ENCODE measurements at regions of chr1 and their contacts with region 1.

Region 1: DNA sequence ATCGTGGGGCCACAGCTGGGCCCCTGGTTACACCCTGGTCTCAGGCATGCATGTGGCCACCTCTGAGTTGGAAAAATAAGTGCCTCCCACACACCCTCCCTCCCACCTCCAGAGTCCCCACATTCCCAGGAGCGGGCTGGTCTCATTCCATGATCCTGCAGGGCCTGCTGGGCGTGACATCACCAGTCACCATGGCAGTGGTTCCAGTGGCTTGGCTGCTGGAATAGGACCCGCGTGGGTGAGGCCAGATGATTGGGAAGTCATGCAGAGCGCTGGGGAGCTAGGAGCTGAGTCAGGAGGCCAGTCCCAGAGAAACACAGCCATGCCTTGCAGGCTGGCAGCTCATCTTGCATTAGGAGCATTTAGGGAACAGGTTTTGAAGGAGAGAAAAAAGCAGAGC is 125.4 kb upstream of the TMEM51 start:
- DNase-seq: peak; percentile 74
- H3K4me3 ChIP-seq: no peak overlapping the region
- H3K27me3 ChIP-seq: no peaks in the 10 kb centered on the region
- CTCF ChIP-seq: no peak

Region 2: DNA sequence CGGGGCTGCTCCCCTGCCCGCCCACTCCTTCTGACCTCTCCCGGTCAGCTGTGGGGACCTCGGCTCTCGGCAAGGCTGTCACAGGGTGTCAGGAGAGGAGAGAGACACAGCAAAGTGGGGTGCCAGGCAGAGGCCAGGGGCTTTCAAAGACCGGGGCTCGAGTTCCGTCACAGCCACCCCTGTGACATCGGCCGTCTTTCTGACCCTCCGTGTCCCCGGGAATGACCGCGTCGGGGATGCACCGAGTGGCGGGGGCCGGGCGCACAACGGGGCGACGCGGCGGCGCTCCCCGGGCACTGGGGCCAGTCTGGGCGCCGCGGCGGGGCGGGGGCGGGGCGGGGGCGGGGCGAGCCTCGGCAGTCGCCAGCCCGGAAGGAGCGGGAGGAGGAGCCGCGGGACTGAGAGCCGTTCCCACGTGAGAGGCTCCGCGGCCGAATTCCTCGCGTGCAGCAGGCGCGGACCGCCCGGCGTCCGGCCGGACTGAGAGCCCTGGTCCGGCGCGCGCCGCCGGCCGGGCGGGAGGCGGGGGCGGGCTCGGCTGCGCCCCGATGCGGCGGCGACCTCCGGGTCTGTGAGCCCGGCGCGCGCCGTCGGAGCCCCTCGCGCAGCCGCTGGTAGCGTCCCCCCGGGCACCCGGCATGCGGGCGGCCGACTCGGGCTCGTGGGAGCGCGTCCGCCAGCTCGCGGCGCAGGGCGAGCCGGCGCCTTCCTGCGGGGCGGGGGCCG is 104.2 kb before region 1 on chr1:
- CTCF ChIA-PET with region 1: interaction called, 19 read pairs
- POLR2A ChIA-PET with region 1: no interaction called
- DNase-seq: no peak
- H3K4me3 ChIP-seq: peak overlapping the region; percentile 75
- H3K27me3 ChIP-seq: no peaks in the 10 kb centered on the region
- CTCF ChIP-seq: no peak

Region 3: DNA sequence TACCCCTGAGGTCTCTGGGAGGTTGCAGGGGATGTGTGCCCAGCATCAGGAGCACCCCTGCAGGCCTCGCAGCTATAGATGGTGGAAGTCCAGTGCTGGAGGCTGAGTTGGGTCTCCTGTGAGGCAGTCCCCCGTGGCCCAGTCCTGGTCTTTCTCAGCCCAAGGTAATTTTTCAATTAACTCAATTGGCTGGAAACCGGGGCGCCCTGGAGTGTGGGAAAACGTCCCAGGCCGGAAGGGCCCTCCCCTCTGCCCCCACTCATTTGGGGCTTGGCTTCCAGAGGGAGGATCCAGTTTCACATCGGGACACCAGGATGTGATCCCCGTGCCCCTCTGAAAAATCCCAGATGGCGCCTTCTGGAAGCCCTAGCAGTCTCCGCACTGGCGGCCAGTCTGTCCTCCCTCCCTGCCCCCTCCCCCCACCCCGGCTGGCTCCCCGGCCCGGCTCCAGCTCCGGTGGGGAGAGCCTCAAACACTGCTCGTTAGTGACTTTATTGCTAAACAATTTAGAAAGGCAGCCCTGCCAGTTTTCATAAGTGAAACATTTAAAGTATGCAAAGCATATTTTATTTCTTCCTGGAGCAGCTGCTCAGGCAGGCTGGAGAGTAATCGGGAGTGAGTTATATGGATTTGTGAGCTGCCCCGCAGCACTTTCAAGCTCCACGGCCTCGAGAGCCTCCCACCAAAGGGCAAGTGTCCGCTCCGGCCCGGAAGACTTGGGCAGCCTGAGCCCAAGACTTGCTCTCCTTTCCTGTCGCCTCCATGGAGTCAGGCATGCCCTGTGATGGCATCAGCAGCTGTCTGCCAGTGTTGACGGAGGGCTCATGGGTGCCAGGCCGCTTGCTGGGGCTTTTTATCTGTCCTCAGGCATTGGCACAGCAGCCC is 82.7 kb before region 1 on chr1:
- CTCF ChIA-PET with region 1: interaction called, 15 read pairs
- POLR2A ChIA-PET with region 1: no interaction called
- DNase-seq: peak; percentile 89
- H3K4me3 ChIP-seq: peak overlapping the region; percentile 31
- H3K27me3 ChIP-seq: no peaks in the 10 kb centered on the region
- CTCF ChIP-seq: no peak

Region 4: GRCh38 chr1:14970115-14970798 is 57.8 kb before region 1 on chr1:
- CTCF ChIA-PET with region 1: interaction called, 12 read pairs
- POLR2A ChIA-PET with region 1: interaction called, 7 read pairs
- DNase-seq: peak; percentile 88
- H3K4me3 ChIP-seq: no peak overlapping the region
- H3K27me3 ChIP-seq: no peaks in the 10 kb centered on the region
- CTCF ChIP-seq: no peak

Region 5: DNA sequence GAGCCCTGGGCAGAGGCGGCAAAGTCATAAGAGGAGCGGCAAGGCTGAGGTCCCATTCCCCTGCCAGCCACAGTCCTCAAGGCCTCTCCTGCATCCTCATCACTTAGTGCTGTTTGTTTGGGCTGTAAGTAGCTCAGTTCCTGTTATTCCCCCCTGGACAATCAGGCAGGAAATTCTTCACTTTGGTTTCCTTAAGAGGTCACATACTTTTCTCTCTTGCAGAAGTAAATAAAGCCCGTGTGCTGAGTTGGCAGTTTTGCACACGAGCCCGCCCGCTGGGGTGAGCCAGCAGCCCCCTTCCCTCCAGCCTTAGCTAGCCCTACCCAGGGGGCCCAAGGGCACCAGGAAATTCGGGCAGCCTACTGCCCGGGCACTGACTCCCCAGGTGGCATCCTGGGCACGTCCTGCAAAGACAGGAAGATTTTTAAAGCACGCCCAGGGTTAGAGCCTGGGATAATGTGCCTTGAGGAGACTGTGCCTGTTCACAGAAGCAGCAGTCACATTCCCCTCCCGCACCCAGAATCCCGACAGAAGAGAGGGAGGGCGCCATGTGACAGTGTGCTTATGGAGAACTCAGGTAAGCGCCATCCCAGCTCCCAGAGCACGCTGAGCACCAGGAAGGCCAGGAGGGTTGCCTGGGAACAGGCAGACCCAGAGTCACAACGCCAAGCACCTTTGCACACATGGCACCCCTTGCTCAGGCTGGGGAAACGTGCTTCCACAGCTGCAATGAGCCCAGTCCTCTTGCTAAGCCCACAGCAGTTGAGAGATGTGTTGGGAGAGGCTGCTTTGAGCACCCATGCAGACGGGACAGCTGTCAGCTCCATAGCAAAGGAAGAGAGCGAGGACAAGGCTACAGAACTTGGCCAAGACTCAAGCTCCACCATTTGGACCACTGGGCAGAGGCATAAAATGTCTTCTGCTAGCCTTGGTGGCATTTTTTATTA is 19.0 kb before region 1 on chr1:
- CTCF ChIA-PET with region 1: interaction called, 22 read pairs
- POLR2A ChIA-PET with region 1: no interaction called
- DNase-seq: no peak
- H3K4me3 ChIP-seq: no peak overlapping the region
- H3K27me3 ChIP-seq: no peaks in the 10 kb centered on the region
- CTCF ChIP-seq: no peak

Region 6: GRCh38 chr1:15014516-15014915 is 13.6 kb before region 1 on chr1:
- CTCF ChIA-PET with region 1: interaction called, 22 read pairs
- POLR2A ChIA-PET with region 1: no interaction called
- DNase-seq: no peak
- H3K4me3 ChIP-seq: no peak overlapping the region
- H3K27me3 ChIP-seq: no peaks in the 10 kb centered on the region
- CTCF ChIP-seq: no peak

Region 7: DNA sequence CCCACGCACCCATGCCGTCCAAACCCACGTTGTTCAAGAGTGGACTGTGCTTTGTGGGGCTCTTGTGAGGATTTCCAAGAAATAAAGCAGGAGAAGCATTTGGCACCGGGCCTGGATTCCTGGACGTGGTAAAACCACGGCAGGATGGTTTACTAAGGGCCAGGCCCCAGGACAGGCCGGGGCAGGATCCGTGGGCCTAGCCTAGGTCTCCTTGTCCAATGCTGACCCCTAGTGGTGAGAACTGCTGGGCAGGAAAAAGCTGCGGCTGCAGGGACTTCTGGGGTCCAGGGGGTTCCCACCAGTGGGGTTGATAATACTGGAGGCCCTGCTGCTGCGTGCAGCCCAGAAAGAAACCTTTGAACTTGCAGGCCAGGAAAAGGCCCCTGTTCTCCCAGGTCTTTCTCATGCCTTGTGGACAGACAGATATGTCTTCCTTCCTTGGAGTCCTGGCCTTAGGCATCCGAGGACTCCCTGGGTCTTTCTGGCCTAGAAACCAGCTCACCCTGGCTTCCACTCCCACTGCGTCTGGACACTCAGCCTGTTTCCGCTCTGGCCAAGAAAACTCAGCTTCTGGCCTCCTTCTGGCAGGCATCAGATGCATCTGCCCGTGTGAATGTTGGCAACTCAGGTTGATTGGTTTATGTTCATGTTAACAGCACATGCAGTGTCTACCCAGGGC is 18.5 kb after region 1 on chr1:
- CTCF ChIA-PET with region 1: interaction called, 12 read pairs
- POLR2A ChIA-PET with region 1: no interaction called
- DNase-seq: peak; percentile 11
- H3K4me3 ChIP-seq: no peak overlapping the region
- H3K27me3 ChIP-seq: no peaks in the 10 kb centered on the region
- CTCF ChIP-seq: peak; percentile 98